GM10248 (cell line): ENCODE measurements at regions of chr12 and their contacts with region 1.

Region 1: DNA sequence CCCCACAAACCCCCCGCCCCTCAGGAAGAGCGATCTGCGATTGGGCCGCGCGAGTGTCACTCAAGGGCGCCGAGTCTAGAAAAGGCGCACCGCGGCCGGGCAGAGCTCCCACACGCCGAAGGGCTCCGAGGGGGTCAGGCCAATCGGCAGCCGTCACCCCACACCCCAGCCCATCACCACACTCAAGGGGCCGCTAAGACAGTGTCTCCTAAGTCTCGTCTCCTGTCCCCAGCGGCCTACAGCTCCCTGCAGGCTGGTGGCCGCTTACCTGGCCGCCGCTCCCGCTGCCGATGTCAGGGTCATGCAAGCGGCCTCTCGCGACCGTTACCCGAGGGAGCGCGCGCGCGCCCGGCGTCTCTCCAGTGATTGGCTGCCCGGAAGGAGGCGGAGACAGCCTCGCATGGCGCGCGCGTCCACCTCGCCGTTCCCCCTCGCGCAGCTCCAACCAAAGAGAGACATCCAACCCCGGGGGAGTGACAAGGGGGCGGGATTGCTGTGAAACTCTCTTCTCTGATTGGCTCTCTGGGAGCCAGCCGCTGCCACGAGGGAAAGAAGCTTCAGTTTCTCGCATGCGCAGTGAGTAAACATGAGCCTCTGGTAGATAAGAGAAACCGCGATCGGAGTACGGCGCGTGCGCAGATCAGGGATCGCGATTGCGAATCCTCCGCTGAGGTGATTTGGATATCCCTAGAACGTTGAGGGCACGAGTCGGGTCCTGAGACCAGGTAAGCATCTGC is at the starts of genes MPHOSPH9 and MTRFR:
- DNase-seq: peak; percentile 96
- CTCF ChIP-seq: no peak

Region 2: DNA sequence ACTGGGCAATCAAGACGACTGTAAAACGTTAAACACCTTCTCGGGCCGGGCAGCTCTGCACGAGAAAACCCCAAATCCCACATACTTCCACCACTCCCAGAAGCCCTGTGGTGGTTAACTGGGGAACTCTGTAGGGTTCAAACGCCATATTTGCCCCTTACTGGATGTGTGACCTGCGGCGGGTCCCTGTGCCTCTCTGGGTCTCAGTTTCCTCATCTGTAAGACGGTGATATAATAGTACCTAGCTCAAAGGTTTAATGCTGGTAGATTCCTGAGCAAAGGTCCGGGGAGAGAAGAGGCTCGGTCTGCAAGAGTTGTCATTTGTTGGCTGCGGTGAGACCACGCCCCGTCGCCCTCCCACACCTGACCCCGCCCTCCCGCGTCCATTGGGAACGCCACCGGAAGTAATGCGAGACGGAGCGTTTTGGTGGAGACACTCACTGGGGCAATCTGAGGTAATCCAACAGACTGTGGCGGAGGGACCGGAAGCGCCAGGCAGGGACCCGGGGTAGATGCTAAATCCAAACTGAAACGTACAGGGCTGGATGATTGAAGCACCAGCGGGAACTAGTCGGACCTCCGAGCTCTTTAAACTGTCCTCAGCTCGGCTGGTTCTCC is 258.6 kb before region 1 on chr12:
- CTCF ChIA-PET with region 1: interaction called, 16 read pairs
- POLR2A ChIA-PET with region 1: interaction called, 6 read pairs
- DNase-seq: peak; percentile 93
- CTCF ChIP-seq: no peak

Region 3: GRCh38 chr12:123043536-123044001 is 189.4 kb before region 1 on chr12:
- CTCF ChIA-PET with region 1: interaction called, 57 read pairs
- POLR2A ChIA-PET with region 1: no interaction called
- DNase-seq: peak; percentile 73
- CTCF ChIP-seq: peak; percentile 74

Region 4: DNA sequence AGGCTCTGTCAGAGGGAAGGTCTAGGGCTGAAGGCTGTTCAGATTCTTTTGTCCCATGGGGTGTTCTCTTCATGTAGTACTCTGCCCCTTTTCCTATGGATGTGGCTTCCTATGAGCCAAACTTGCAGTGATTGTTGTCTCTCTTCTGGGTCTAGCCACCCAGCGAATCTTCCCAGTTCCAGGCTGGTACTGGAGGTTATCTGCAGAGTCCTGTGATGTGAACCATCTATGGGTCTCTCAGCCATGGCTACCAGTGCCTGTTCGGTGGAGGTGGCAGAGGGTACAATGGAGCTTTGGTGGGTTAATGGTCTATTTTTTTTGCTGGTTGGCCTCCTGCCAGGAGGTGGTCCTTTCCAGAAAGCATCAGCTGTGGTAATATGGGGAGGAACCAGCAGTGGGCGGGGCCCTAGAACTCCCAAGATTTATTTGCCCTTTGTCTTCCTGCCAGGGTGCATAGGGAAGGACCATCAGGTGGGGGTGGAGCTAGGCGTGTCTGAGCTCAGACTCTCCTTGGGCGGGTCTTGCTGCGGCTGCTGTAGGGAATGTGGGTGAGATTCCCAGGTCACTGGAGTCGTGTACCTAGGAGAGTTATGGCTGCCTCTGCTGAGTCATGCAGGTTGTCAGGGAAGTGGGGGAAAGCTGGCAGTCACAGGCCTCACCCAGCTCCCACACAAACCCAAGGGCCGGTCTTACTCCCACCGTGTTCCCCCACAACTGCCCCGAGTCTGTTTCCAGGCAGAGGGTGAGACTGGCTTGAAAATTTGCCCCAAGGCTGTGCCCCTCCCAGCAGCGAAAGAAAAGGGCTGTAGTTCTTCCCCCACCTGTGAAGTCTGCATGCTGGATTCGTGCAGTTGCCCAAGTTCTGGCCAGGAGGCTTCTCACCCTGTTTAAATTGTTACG is 17.8 kb after region 1 on chr12:
- CTCF ChIA-PET with region 1: interaction called, 37 read pairs
- POLR2A ChIA-PET with region 1: interaction called, 13 read pairs
- DNase-seq: no peak
- CTCF ChIP-seq: no peak

Region 5: GRCh38 chr12:123258593-123258992 is 25.6 kb after region 1 on chr12:
- CTCF ChIA-PET with region 1: interaction called, 31 read pairs
- POLR2A ChIA-PET with region 1: interaction called, 4 read pairs
- DNase-seq: no peak
- CTCF ChIP-seq: no peak